ENCODE measurements at regions of chr17 and their contacts with region 1.

Region 1: GRCh38 chr17:81833160-81833920 is at the start of gene MCRIP1:
- DNase-seq: peak; percentile 91
- ATAC-seq: peak; percentile 69
- H3K4me3 ChIP-seq: peak within 1 kb of the TSS; percentile 80 to 86 (median 84)
- H3K27ac ChIP-seq: peak within 1 kb of the TSS; percentile 93
- H3K4me1 ChIP-seq: peaks cover 66% of the 10 kb centered on the region
- H3K27me3 ChIP-seq: no peaks in the 10 kb centered on the region; a peak in 1 of 5 replicates
- CTCF ChIP-seq: peak; percentile 1; the same call in 1 of the 2 replicates
- EP300 ChIP-seq: no peak
- POLR2A ChIP-seq: peak; percentile 79
- RAD21 ChIP-seq: peak; percentile 46
- total RNA-seq, gene MCRIP1: 76.1 and 84.9 TPM in 2 replicates

Region 2: GRCh38 chr17:81683584-81684237 is 149.6 kb before region 1 on chr17 and contains the starts of genes ARL16 and HGS:
- CTCF ChIA-PET with region 1: no interaction called
- POLR2A ChIA-PET with region 1: interaction called, 10 read pairs
- in situ Hi-C with region 1: no loop called
- intact Hi-C with region 1: no loop called
- DNase-seq: peak; percentile 99
- ATAC-seq: peak; percentile 92
- H3K4me3 ChIP-seq: peak within 1 kb of the TSS; percentile 94 to 99 (median 97)
- H3K27ac ChIP-seq: peak within 1 kb of the TSS; percentile 68
- H3K4me1 ChIP-seq: peaks cover 43% of the 10 kb centered on the region
- H3K27me3 ChIP-seq: no peaks in the 10 kb centered on the region; a peak in 1 of 5 replicates
- CTCF ChIP-seq: no peak
- EP300 ChIP-seq: no peak
- POLR2A ChIP-seq: peak; percentile 70 to 76
- RAD21 ChIP-seq: peak; percentile 64
- total RNA-seq, gene ARL16: 18.8 and 20.8 TPM in 2 replicates
- total RNA-seq, gene HGS: 54.1 and 73.3 TPM in 2 replicates

Region 3: GRCh38 chr17:81711814-81712467 is 121.4 kb before region 1 on chr17 and contains the start of gene SLC25A10:
- CTCF ChIA-PET with region 1: no interaction called
- POLR2A ChIA-PET with region 1: interaction called, 19 read pairs
- in situ Hi-C with region 1: no loop called
- intact Hi-C with region 1: no loop called
- DNase-seq: peak; percentile 89
- ATAC-seq: peak; percentile 56
- H3K4me3 ChIP-seq: peak within 1 kb of the TSS; percentile 87 to 95 (median 92)
- H3K27ac ChIP-seq: peak within 1 kb of the TSS; percentile 93
- H3K4me1 ChIP-seq: peaks cover 32% of the 10 kb centered on the region
- H3K27me3 ChIP-seq: no peaks in the 10 kb centered on the region; a peak in 1 of 5 replicates
- CTCF ChIP-seq: no peak; the same call in 1 of the 2 replicates
- EP300 ChIP-seq: peak; percentile 41 to 88; a peak in 2 of 4 replicates
- POLR2A ChIP-seq: peak in 1 of 2 experiments; percentile 45; a peak in 1 of 4 replicates
- RAD21 ChIP-seq: peak; percentile 79
- total RNA-seq, gene SLC25A10: 111 and 140 TPM in 2 replicates

Region 4: GRCh38 chr17:81814748-81815645 is 18.3 kb before region 1 on chr17:
- CTCF ChIA-PET with region 1: no interaction called
- POLR2A ChIA-PET with region 1: interaction called, 11 read pairs
- in situ Hi-C with region 1: no loop called
- intact Hi-C with region 1: no loop called
- DNase-seq: peak; percentile 47
- ATAC-seq: peak; percentile 65
- H3K4me3 ChIP-seq: peak overlapping the region in 1 of 3 experiments; percentile 49; a peak in 1 of 6 replicates
- H3K27ac ChIP-seq: no peak overlapping the region
- H3K4me1 ChIP-seq: peaks cover 36% of the 10 kb centered on the region
- H3K27me3 ChIP-seq: peaks cover 6 to 19% of the 10 kb centered on the region in 2 experiments; a peak in 4 of 5 replicates
- CTCF ChIP-seq: no peak
- EP300 ChIP-seq: peak in 1 of 2 experiments; percentile 57; a peak in 2 of 4 replicates
- POLR2A ChIP-seq: no peak
- RAD21 ChIP-seq: no peak

Region 5: GRCh38 chr17:81854974-81855774 is 21.8 kb after region 1 on chr17:
- CTCF ChIA-PET with region 1: no interaction called
- POLR2A ChIA-PET with region 1: interaction called, 27 read pairs
- in situ Hi-C with region 1: no loop called
- intact Hi-C with region 1: no loop called
- DNase-seq: no peak
- ATAC-seq: peak; percentile 13
- H3K4me3 ChIP-seq: no peak overlapping the region
- H3K27ac ChIP-seq: no peak overlapping the region
- H3K4me1 ChIP-seq: peaks cover 57% of the 10 kb centered on the region
- H3K27me3 ChIP-seq: no peaks in the 10 kb centered on the region; a peak in 1 of 5 replicates
- CTCF ChIP-seq: peak; percentile 56
- EP300 ChIP-seq: no peak
- POLR2A ChIP-seq: peak; percentile 46 to 56; a peak in 2 of 4 replicates
- RAD21 ChIP-seq: no peak

Region 6: GRCh38 chr17:81871387-81872230 is 38.3 kb after region 1 on chr17:
- CTCF ChIA-PET with region 1: no interaction called
- POLR2A ChIA-PET with region 1: interaction called, 19 read pairs
- in situ Hi-C with region 1: no loop called
- intact Hi-C with region 1: no loop called
- DNase-seq: peak; percentile 86
- ATAC-seq: no peak; the same call in 2 of the 3 replicates
- H3K4me3 ChIP-seq: peak overlapping the region; percentile 65 to 92 (median 90)
- H3K27ac ChIP-seq: peak overlapping the region; percentile 98
- H3K4me1 ChIP-seq: peaks cover 52% of the 10 kb centered on the region
- H3K27me3 ChIP-seq: no peaks in the 10 kb centered on the region
- CTCF ChIP-seq: peak; percentile 74
- EP300 ChIP-seq: no peak; a peak in 1 of 4 replicates
- POLR2A ChIP-seq: peak in 1 of 2 experiments; percentile 58; a peak in 2 of 4 replicates
- RAD21 ChIP-seq: peak; percentile 81

Region 7: GRCh38 chr17:81917565-81918332 is 84.4 kb after region 1 on chr17 and contains the start of gene SIRT7:
- CTCF ChIA-PET with region 1: no interaction called
- POLR2A ChIA-PET with region 1: no interaction called
- in situ Hi-C with region 1: no loop called
- intact Hi-C with region 1: no loop called
- DNase-seq: peak; percentile 72
- ATAC-seq: peak; percentile 67
- H3K4me3 ChIP-seq: peak within 1 kb of the TSS; percentile 87 to 94 (median 93)
- H3K27ac ChIP-seq: peak within 1 kb of the TSS; percentile 46
- H3K4me1 ChIP-seq: peaks cover 27% of the 10 kb centered on the region
- H3K27me3 ChIP-seq: no peaks in the 10 kb centered on the region
- CTCF ChIP-seq: no peak; the same call in 1 of the 2 replicates
- EP300 ChIP-seq: no peak
- POLR2A ChIP-seq: peak; percentile 50 to 80; a peak in 3 of 4 replicates
- RAD21 ChIP-seq: peak; percentile 66
- total RNA-seq, gene SIRT7: 14.5 and 24.8 TPM in 2 replicates